Endothelial cell of umbilical vein (primary cell): ENCODE measurements at regions of chr6 and their contacts with region 1.

Region 1: GRCh38 chr6:1821513-1822183 is 211.9 kb downstream of the FOXC1 start:
- DNase-seq: peak; percentile 89
- H3K4me3 ChIP-seq: no peak overlapping the region
- H3K27ac ChIP-seq: peak overlapping the region; percentile 65
- H3K4me1 ChIP-seq: peaks cover 37% of the 10 kb centered on the region
- H3K27me3 ChIP-seq: no peaks in the 10 kb centered on the region
- CTCF ChIP-seq: no peak
- POLR2A ChIP-seq: no peak

Region 2: GRCh38 chr6:1767481-1768251 is 54.0 kb before region 1 on chr6:
- CTCF ChIA-PET with region 1: no interaction called
- POLR2A ChIA-PET with region 1: no interaction called
- dilution Hi-C with region 1: no loop called
- intact Hi-C with region 1: loop called (anchors 5 kb)
- DNase-seq: peak; percentile 38
- H3K4me3 ChIP-seq: no peak overlapping the region
- H3K27ac ChIP-seq: no peak overlapping the region
- H3K4me1 ChIP-seq: peaks cover 53% of the 10 kb centered on the region
- H3K27me3 ChIP-seq: no peaks in the 10 kb centered on the region
- CTCF ChIP-seq: no peak
- POLR2A ChIP-seq: no peak

Region 3: GRCh38 chr6:1787894-1788293 is 33.8 kb before region 1 on chr6:
- CTCF ChIA-PET with region 1: interaction called, 3 read pairs
- POLR2A ChIA-PET with region 1: no interaction called
- dilution Hi-C with region 1: no loop called
- intact Hi-C with region 1: loop called (anchors 1 kb)
- DNase-seq: peak; percentile 92
- H3K4me3 ChIP-seq: no peak overlapping the region
- H3K27ac ChIP-seq: peak overlapping the region; percentile 84
- H3K4me1 ChIP-seq: peaks cover 45% of the 10 kb centered on the region
- H3K27me3 ChIP-seq: no peaks in the 10 kb centered on the region
- CTCF ChIP-seq: no peak
- POLR2A ChIP-seq: no peak

Region 4: DNA sequence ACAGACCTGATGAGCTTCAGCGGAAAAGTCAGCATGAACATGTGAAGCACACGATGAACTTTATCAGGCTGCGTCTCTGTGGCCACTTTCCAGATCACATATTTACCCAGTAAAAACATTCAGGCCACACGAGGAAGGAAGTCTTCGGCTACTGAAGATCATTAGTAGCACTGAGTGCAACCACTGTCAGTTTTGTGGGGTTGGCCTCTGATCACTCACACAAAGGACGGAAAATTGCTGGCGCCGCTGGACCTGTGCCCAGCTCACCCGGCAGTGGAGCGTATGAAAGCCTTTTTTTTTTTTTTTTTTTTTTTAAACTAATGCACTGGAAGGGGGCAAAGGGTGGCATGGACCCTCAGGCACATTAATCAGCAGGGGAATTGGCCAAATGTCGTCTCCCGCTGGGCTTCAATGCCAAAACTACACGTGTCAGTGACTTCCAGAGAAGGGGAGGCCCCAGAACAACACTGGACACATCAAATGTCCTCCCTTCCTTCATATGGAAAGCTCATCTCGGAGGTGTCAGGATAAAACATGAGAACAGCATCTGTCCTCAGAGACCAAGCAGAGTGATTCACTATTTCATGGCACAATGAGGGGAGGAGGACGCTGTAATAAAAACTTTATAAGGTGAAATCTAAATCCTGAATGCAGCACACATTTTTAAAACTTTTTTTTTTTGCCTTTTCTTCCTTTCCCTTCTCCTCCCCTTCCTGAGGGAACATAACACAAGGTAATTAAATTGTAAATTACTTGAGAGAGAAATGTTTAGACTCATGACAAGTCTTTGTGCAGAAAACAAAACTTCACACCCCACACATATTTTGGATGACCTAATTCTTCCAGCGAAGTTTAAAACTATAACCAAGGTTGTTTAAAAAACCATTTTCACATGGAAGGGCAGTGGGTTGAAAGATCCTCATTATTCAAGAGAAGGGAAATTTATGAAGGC is 11.5 kb after region 1 on chr6:
- CTCF ChIA-PET with region 1: interaction called, 15 read pairs
- POLR2A ChIA-PET with region 1: interaction called, 7 read pairs
- dilution Hi-C with region 1: no loop called
- intact Hi-C with region 1: no loop called
- DNase-seq: peak; percentile 91
- H3K4me3 ChIP-seq: peak overlapping the region in 1 of 3 experiments; percentile 2
- H3K27ac ChIP-seq: peak overlapping the region; percentile 30
- H3K4me1 ChIP-seq: peaks cover 23% of the 10 kb centered on the region
- H3K27me3 ChIP-seq: no peaks in the 10 kb centered on the region
- CTCF ChIP-seq: no peak
- POLR2A ChIP-seq: no peak

Region 5: GRCh38 chr6:1917626-1918371 is 96.2 kb after region 1 on chr6:
- CTCF ChIA-PET with region 1: no interaction called
- POLR2A ChIA-PET with region 1: no interaction called
- dilution Hi-C with region 1: no loop called
- intact Hi-C with region 1: loop called (anchors 1 kb)
- DNase-seq: peak; percentile 86
- H3K4me3 ChIP-seq: no peak overlapping the region
- H3K27ac ChIP-seq: peak overlapping the region; percentile 75
- H3K4me1 ChIP-seq: peaks cover 18% of the 10 kb centered on the region
- H3K27me3 ChIP-seq: no peaks in the 10 kb centered on the region
- CTCF ChIP-seq: no peak
- POLR2A ChIP-seq: no peak

Region 6: DNA sequence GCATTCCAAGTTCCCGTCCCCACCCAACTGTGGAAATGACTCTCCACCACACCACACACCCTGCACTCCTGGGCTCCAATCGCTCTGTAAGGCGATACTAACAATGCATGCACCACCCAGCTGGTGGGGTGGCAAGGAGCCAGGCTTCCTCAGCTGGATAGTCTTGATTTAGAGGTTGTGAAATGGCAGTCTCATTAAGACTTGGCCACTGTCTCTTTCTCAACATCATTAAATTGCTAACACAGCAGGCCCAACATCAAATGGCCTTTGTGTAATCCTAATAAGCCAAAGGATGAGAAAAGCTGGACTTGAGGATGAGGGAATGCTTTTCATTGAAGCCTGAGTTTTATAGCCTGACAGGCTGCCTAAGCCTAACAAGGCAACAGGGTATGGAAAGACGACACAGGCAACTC is 200.1 kb after region 1 on chr6:
- CTCF ChIA-PET with region 1: no interaction called
- POLR2A ChIA-PET with region 1: no interaction called
- dilution Hi-C with region 1: no loop called
- intact Hi-C with region 1: loop called (anchors 5 kb)
- DNase-seq: peak; percentile 48
- H3K4me3 ChIP-seq: no peak overlapping the region
- H3K27ac ChIP-seq: no peak overlapping the region
- H3K4me1 ChIP-seq: no peaks in the 10 kb centered on the region
- H3K27me3 ChIP-seq: no peaks in the 10 kb centered on the region
- CTCF ChIP-seq: no peak
- POLR2A ChIP-seq: no peak

Region 7: GRCh38 chr6:2245094-2245876 is 423.6 kb after region 1 on chr6 and contains the start of gene GMDS:
- CTCF ChIA-PET with region 1: no interaction called
- POLR2A ChIA-PET with region 1: no interaction called
- dilution Hi-C with region 1: no loop called
- intact Hi-C with region 1: loop called (anchors 10 kb)
- DNase-seq: peak; percentile 90
- H3K4me3 ChIP-seq: peak within 1 kb of the TSS; percentile 23 to 91 (median 70)
- H3K27ac ChIP-seq: peak within 1 kb of the TSS; percentile 67
- H3K4me1 ChIP-seq: peaks cover 10% of the 10 kb centered on the region
- H3K27me3 ChIP-seq: no peaks in the 10 kb centered on the region
- CTCF ChIP-seq: no peak
- POLR2A ChIP-seq: peak; percentile 87
- total RNA-seq, gene GMDS: 23.5 TPM in 2 replicates